AG04449 (cell line): ENCODE measurements at regions of chr20 and their contacts with region 1.

Region 1: DNA sequence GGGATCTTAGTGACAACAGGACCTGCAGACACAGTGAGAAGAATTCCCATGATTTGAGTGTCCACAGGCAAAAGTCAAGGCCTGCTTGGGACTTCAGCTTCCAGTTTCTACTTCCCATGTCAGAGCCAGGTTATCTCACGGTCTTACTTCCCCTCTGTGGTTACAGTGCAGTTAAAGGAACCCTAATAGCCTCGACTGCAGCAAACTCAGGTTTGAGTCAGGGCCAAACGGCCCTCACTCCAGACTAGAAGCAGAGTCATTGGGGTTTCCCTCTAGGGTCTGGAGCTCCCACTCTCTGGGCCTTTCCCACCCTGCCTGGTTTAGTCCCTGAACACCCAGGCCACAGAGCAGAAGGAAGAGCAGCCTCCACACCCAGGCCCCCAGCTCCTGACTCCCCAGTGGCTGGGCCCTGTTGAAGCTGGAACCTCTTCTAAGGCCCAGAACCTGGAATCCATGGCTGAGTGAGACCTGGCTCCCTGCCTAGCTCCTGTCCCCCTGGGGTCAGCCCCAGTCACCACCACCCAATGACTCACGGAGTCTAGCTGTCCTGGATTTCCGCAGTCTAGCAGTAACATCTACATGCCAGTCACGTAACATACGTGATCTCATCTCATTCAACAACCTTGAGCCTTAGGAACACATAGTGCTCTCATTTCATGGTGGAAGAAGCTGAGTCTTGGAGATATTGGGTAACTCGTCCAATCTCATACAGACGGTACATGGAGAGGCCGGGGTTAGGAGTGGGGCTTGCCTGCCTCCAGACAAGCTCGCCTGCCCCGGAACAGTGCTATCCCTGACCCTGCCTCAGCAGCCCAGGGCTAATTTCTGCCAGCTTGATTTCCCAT is 9.2 kb upstream of the GHRH start:
- DNase-seq: no peak
- H3K4me3 ChIP-seq: no peak overlapping the region
- CTCF ChIP-seq: no peak

Region 2: DNA sequence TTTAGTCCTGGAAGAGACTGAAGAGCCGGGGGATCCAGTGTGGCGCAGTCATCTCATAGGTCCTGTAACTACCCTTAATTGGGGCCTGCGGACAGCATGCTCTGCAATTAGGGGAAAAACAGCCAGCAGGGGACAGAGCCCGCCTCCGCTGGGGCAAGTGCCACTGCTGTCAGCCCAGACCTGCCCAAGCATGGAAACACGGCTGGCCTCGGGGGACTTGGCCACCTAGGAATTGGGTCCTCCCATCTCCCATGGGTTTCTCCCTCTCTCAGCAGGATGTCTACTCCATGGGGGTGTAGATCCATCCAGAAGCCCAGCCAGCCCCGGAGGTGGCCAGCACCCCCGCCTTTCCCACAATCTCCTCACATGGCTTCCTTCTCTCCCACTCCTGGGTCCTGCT is 12.8 kb before region 1 on chr20:
- CTCF ChIA-PET with region 1: interaction called, 33 read pairs
- POLR2A ChIA-PET with region 1: no interaction called
- DNase-seq: no peak
- H3K4me3 ChIP-seq: no peak overlapping the region
- CTCF ChIP-seq: no peak

Region 3: DNA sequence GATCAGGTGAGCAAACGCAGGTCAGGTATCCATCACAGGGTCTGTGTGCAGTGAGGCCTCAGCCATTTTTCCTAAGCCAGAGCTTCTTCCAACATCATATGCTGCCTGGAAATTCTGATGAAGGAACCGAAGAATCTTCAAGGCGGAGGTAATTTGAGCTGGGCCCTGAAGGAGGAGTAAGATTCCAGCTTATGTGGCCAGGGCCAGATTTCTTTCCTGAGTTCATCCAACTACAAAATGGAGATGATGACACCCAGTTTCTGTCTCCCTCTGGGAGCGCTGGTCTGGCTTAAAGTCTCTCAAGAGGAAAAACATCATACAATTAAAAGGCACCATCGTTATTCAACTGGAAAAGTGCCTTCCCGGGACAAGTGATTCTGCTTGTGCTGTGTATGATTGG is 11.8 kb after region 1 on chr20:
- CTCF ChIA-PET with region 1: interaction called, 66 read pairs
- POLR2A ChIA-PET with region 1: interaction called, 3 read pairs
- DNase-seq: no peak
- H3K4me3 ChIP-seq: no peak overlapping the region
- CTCF ChIP-seq: peak; percentile 57

Region 4: DNA sequence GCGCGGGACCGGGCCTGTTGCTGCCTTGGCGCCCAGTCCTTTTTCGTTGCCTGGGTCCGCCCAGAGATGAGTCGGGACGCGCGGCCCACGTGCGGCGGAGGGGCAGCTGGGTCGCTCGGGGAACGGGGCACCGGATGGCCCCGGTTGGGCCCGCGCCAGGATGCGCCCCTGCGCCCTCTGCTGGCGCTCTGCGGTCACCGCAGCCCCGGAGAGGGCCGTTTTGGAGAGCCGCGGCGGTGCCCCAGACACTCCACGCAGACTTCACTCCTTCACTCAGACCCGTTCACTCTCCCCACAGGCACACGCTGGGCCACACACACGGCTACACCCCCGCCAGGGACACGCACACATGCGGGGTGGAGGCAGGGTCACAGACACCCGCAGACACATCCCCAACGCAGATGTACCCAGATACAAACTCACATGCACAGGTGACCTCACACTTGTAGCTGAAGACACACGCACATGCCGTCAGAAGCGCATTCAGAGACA is 113.9 kb after region 1 on chr20:
- CTCF ChIA-PET with region 1: interaction called, 326 read pairs
- POLR2A ChIA-PET with region 1: no interaction called
- DNase-seq: no peak
- H3K4me3 ChIP-seq: peak overlapping the region; percentile 23; the same call in 1 of the 2 replicates
- CTCF ChIP-seq: peak; percentile 98

Region 5: GRCh38 chr20:37527638-37528441 is 257.0 kb after region 1 on chr20 and contains the start of gene BLCAP:
- CTCF ChIA-PET with region 1: interaction called, 283 read pairs
- POLR2A ChIA-PET with region 1: no interaction called
- DNase-seq: no peak
- H3K4me3 ChIP-seq: peak within 1 kb of the TSS; percentile 96
- CTCF ChIP-seq: no peak

Region 6: GRCh38 chr20:37534401-37535157 is 263.8 kb after region 1 on chr20:
- CTCF ChIA-PET with region 1: interaction called, 283 read pairs
- POLR2A ChIA-PET with region 1: no interaction called
- DNase-seq: no peak
- H3K4me3 ChIP-seq: no peak overlapping the region
- CTCF ChIP-seq: peak; percentile 71

Region 7: GRCh38 chr20:37543828-37544227 is 273.0 kb after region 1 on chr20:
- CTCF ChIA-PET with region 1: interaction called, 33 read pairs
- POLR2A ChIA-PET with region 1: no interaction called
- DNase-seq: no peak
- H3K4me3 ChIP-seq: no peak overlapping the region
- CTCF ChIP-seq: peak; percentile 53